Mammary epithelial cell (primary cell): ENCODE measurements at regions of chr3 and their contacts with region 1.

Region 1: DNA sequence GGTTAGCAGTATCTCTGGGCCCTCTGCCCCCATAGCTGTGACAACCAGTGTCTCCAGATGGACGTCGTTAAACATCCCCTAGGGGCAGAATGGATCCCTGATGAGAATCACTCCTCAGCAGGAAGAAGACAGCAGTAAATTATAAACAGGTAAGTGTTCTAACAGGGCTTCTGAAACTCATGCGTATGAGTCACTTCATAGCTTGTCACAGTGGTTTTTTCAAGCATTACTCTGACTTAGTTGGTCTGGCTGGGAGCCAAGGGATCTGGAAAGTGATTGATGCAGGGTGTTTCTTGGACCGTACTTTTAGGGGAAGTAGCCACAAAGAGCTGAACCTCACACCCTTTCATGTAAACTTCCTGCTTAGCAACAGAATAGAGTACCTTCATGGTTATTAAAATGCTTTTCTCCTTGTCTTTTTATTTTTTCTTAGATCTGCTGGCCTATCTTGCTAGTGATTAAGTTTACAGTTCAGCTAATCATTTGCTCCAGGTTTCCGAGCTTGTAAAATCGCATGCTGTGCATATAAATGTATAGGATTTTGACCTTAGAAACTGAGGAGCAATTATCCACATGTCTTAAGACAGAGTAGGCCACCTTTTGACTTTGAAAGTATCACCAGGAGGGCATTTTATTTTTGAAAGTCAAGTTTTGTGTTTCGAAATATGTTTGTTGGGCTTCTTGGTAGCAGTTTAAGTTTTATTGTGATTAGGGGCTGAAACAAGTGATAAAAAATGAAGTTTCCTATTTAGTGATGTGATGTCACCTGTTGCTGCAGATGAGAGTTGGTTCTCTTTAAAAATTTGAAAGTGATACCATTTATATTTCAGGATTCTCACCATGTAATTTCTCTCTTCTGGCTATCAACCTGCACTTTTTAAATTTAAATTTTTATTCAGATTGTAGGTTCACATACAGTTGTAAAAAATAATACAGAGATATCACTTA is 333.9 kb downstream of the PTPRG start:
- DNase-seq: peak; percentile 96
- H3K4me3 ChIP-seq: no peak overlapping the region
- H3K27ac ChIP-seq: no peak overlapping the region
- H3K4me1 ChIP-seq: peaks cover 13% of the 10 kb centered on the region
- H3K27me3 ChIP-seq: peaks cover 5% of the 10 kb centered on the region
- CTCF ChIP-seq: no peak

Region 2: GRCh38 chr3:61914276-61914675 is 19.0 kb after region 1 on chr3:
- CTCF ChIA-PET with region 1: no interaction called
- dilution Hi-C with region 1: no loop called
- in situ Hi-C with region 1: no loop called
- intact Hi-C with region 1: loop called (anchors 2 kb)
- DNase-seq: no peak
- H3K4me3 ChIP-seq: no peak overlapping the region
- H3K27ac ChIP-seq: no peak overlapping the region
- H3K4me1 ChIP-seq: no peaks in the 10 kb centered on the region
- H3K27me3 ChIP-seq: no peaks in the 10 kb centered on the region
- CTCF ChIP-seq: no peak

Region 3: DNA sequence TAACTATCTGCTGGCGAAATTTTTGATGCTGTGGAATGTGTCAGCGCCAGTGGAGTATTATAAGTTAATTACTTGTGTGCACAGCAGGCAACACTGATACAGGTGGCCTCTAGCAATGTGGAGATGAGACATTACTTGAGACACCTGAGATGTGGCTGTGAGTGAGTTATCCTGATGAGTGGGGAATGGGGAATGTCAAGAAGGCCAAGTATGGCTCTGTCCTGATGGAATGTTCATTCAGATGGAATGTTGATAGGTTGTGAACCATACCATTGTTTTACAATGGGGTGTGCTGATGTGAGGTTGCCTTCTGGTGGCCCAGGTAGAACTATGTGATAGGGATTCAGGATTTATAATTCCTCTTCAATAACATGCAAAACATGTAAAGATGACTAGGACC is 70.9 kb after region 1 on chr3:
- CTCF ChIA-PET with region 1: no interaction called
- dilution Hi-C with region 1: no loop called
- in situ Hi-C with region 1: no loop called
- intact Hi-C with region 1: loop called (anchors 10 kb)
- DNase-seq: peak; percentile 83
- H3K4me3 ChIP-seq: no peak overlapping the region
- H3K27ac ChIP-seq: no peak overlapping the region
- H3K4me1 ChIP-seq: peaks cover 29% of the 10 kb centered on the region
- H3K27me3 ChIP-seq: no peaks in the 10 kb centered on the region
- CTCF ChIP-seq: no peak

Region 4: GRCh38 chr3:62027796-62028195 is 132.5 kb after region 1 on chr3:
- CTCF ChIA-PET with region 1: no interaction called
- dilution Hi-C with region 1: no loop called
- in situ Hi-C with region 1: no loop called
- intact Hi-C with region 1: no loop called
- DNase-seq: no peak
- H3K4me3 ChIP-seq: no peak overlapping the region
- H3K27ac ChIP-seq: no peak overlapping the region
- H3K4me1 ChIP-seq: no peaks in the 10 kb centered on the region
- H3K27me3 ChIP-seq: no peaks in the 10 kb centered on the region
- CTCF ChIP-seq: no peak